ENCODE measurements at regions of chr17 and their contacts with region 1.

Region 1: GRCh38 chr17:21284319-21285163 is at the start of gene MAP2K3:
- DNase-seq: peak; percentile 98 to 100
- ATAC-seq: peak; percentile 46 to 75
- H3K4me3 ChIP-seq: peak within 1 kb of the TSS; percentile 78
- H3K27ac ChIP-seq: peak within 1 kb of the TSS; percentile 76 to 89
- H3K4me1 ChIP-seq: peaks cover 52% of the 10 kb centered on the region
- CTCF ChIP-seq: no peak
- EP300 ChIP-seq: no peak
- POLR2A ChIP-seq: peak; percentile 94
- RAD21 ChIP-seq: no peak
- polyA plus RNA-seq, gene MAP2K3: 13.9 and 25.0 TPM in 2 replicates

Region 2: DNA sequence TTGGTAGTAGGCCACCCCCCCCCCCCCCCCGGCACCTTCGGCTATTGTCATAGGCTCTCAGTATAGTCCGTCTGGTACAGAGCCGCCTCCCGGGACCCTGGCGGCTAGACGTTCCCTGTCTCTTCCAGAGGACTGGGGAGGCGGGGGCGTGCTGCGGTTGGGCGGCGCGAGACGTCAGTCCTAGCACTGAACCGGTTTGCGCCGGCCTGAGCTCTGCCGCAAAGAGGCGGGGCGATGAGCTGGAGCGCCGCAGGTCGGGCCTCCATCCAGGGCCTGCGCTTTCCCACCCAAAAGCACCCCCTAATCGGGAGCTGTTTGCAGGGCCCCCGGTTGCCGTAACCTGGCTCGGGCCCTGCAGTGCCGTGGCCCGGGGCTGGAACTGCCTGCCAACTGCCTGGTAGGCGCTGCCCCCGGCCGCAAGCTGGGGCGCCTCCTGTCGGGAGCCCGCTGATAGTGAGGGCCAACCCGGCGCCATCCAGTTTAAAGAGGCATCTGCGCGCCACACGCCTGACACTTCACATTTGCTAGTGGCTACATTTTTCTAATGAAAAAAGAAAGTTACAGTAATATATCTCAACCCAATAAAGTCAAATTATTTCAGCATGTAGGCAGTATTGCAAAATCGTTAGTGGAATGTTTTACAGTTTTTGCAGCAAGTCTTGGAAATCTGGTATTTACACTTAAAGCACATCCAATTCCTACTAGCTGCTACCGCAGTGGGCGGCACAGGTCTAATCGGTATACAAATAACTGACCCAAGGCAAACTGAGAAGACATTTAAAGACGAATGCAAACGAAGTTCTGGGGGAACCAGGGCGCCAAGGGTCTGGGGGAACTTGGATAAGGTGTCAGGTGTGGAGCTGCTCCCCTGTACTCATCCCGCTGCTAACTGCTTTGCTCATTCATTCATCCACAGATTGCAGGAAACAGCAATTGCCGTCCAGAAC is 241.0 kb before region 1 on chr17:
- CTCF ChIA-PET with region 1: no interaction called
- POLR2A ChIA-PET with region 1: interaction called, 13 read pairs
- DNase-seq: peak; percentile 91 to 99
- ATAC-seq: peak; percentile 91 to 96
- H3K4me3 ChIP-seq: peak overlapping the region; percentile 45
- H3K27ac ChIP-seq: peak overlapping the region; percentile 90
- H3K4me1 ChIP-seq: peaks cover 24% of the 10 kb centered on the region
- CTCF ChIP-seq: peak; percentile 86
- EP300 ChIP-seq: no peak
- POLR2A ChIP-seq: peak; percentile 91
- RAD21 ChIP-seq: peak in 1 of 2 experiments; percentile 64; a peak in 3 of 5 replicates

Region 3: DNA sequence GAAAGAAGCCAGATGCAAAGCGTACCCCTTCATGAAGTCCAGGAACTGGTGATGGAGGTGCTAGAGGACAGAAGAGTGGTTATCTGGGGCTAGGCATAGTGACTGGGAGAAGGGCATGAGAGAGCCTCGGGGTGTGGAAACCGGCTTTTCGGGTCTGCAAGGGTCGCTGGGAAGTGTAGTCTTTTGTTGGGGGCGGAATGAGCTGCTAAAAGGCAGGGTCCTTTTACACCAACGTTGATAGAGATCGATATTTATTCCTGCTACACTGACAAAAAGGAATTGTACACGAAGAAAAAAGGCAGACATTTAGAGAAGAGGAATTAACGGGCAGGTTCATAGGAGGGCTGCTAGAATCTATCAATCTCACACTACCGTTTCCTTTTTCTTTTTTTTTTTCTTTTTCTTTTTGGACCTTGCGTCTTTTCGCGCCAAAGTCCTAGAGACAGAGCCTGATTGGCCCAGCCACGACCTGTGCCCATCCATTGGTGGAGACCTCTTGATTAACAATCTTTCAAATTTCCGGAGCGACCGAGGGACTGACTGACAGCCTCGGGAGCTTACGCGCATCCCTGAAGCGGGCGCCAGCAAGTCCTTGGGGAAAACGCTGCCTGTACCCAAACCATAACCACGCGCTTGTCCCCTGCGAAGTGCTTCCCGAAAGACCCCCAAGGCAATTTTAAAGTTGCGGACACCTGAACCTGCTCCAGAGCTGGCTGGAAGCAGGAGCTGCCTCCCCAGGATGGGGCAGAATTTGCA is 185.4 kb before region 1 on chr17:
- CTCF ChIA-PET with region 1: no interaction called
- POLR2A ChIA-PET with region 1: no interaction called
- DNase-seq: peak; percentile 94 to 98
- ATAC-seq: peak; percentile 99
- H3K4me3 ChIP-seq: peak overlapping the region; percentile 56
- H3K27ac ChIP-seq: peak overlapping the region; percentile 57 to 78; a peak in 5 of 6 replicates
- H3K4me1 ChIP-seq: 0 out of 3 replicates have a peak, but pooled peaks cover 4% of the 10 kb centered on the region
- CTCF ChIP-seq: no peak
- EP300 ChIP-seq: no peak
- POLR2A ChIP-seq: peak; percentile 32
- RAD21 ChIP-seq: no peak

Region 4: GRCh38 chr17:21186399-21187187 is 97.9 kb before region 1 on chr17:
- CTCF ChIA-PET with region 1: no interaction called
- POLR2A ChIA-PET with region 1: no interaction called
- DNase-seq: no peak
- ATAC-seq: no peak
- H3K4me3 ChIP-seq: no peak overlapping the region
- H3K27ac ChIP-seq: no peak overlapping the region
- H3K4me1 ChIP-seq: no peaks in the 10 kb centered on the region
- CTCF ChIP-seq: no peak
- EP300 ChIP-seq: no peak
- POLR2A ChIP-seq: no peak
- RAD21 ChIP-seq: no peak

Region 5: DNA sequence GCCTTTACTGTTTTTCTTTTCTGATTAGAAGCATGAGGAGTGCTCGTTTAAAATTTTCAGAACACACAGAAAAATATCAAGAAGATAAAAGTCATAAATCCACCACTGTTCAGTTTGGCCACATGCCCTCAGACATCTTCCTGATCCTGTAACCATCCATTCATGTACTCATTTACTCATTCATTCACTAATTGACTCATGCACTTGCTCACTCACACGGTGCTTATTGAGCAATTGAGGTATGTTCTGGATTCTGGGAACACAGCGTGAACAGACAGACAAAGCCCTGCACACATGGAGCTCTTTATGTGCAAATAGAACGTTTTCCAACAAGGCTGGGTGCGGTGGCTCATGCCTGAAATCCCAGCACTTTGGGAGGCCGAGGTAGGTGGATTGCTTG is 21.2 kb before region 1 on chr17:
- CTCF ChIA-PET with region 1: interaction called, 35 read pairs
- POLR2A ChIA-PET with region 1: no interaction called
- DNase-seq: no peak
- ATAC-seq: no peak
- H3K4me3 ChIP-seq: no peak overlapping the region
- H3K27ac ChIP-seq: no peak overlapping the region; a peak in 1 of 6 replicates
- H3K4me1 ChIP-seq: no peaks in the 10 kb centered on the region; the same call in 2 of the 3 replicates
- CTCF ChIP-seq: no peak
- EP300 ChIP-seq: no peak
- POLR2A ChIP-seq: no peak
- RAD21 ChIP-seq: no peak

Region 6: DNA sequence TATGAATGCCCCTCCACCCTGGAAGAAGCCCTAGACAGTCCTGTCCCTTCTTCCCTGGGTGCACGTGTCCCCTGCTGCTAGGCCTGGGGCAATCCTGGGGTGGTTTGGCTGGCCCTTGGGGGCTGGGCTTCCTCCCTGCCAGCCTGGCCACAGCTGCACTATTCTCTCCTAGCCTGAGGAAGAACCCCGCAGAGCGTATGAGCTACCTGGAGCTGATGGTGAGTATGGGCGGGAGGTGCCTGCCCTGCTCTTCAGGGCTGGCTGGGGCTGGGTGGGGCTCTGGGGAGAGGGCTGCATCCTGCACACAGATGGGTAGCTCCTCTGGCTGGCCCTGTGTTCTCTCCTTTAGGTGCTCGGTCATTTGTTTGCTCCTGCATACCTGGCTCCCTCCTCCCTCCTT is 28.8 kb after region 1 on chr17:
- CTCF ChIA-PET with region 1: interaction called, 18 read pairs
- POLR2A ChIA-PET with region 1: no interaction called
- DNase-seq: no peak
- ATAC-seq: no peak
- H3K4me3 ChIP-seq: no peak overlapping the region
- H3K27ac ChIP-seq: no peak overlapping the region
- H3K4me1 ChIP-seq: peaks cover 23% of the 10 kb centered on the region
- CTCF ChIP-seq: no peak
- EP300 ChIP-seq: no peak
- POLR2A ChIP-seq: no peak
- RAD21 ChIP-seq: no peak

Region 7: GRCh38 chr17:21445091-21445650 is 160.6 kb after region 1 on chr17:
- CTCF ChIA-PET with region 1: interaction called, 40 read pairs
- POLR2A ChIA-PET with region 1: no interaction called
- DNase-seq: no peak
- ATAC-seq: no peak
- H3K4me3 ChIP-seq: no peak overlapping the region
- H3K27ac ChIP-seq: no peak overlapping the region
- H3K4me1 ChIP-seq: peaks cover 3% of the 10 kb centered on the region; the same call in 1 of the 3 replicates
- CTCF ChIP-seq: no peak
- EP300 ChIP-seq: no peak
- POLR2A ChIP-seq: no peak
- RAD21 ChIP-seq: no peak

Region 8: GRCh38 chr17:21482189-21482865 is 197.8 kb after region 1 on chr17:
- CTCF ChIA-PET with region 1: no interaction called
- POLR2A ChIA-PET with region 1: no interaction called
- DNase-seq: no peak
- ATAC-seq: no peak
- H3K4me3 ChIP-seq: no peak overlapping the region
- H3K27ac ChIP-seq: no peak overlapping the region
- H3K4me1 ChIP-seq: no peaks in the 10 kb centered on the region
- CTCF ChIP-seq: no peak
- EP300 ChIP-seq: no peak
- POLR2A ChIP-seq: no peak
- RAD21 ChIP-seq: no peak

Region 9: GRCh38 chr17:21511363-21512198 is 227.0 kb after region 1 on chr17:
- CTCF ChIA-PET with region 1: interaction called, 121 read pairs
- POLR2A ChIA-PET with region 1: interaction called, 3 read pairs
- DNase-seq: peak; percentile 84 to 87
- ATAC-seq: peak; percentile 93 to 98
- H3K4me3 ChIP-seq: peak overlapping the region; percentile 43
- H3K27ac ChIP-seq: peak overlapping the region; percentile 24 to 79; a peak in 5 of 6 replicates
- H3K4me1 ChIP-seq: no peaks in the 10 kb centered on the region; the same call in 2 of the 3 replicates
- CTCF ChIP-seq: peak; percentile 86
- EP300 ChIP-seq: no peak
- POLR2A ChIP-seq: no peak
- RAD21 ChIP-seq: peak; percentile 69 to 86

Measured in A549 (cell line).